ENCODE measurements at regions of chr22 and their contacts with region 1.

Region 1: GRCh38 chr22:46006379-46007002 is 29.5 kb upstream of the WNT7B start:
- DNase-seq: peak; percentile 96
- ATAC-seq: peak; percentile 88
- H3K4me3 ChIP-seq: peak overlapping the region; percentile 21
- H3K27ac ChIP-seq: peak overlapping the region; percentile 94
- H3K4me1 ChIP-seq: peaks cover 49% of the 10 kb centered on the region
- H3K27me3 ChIP-seq: no peaks in the 10 kb centered on the region
- CTCF ChIP-seq: peak; percentile 97

Region 2: DNA sequence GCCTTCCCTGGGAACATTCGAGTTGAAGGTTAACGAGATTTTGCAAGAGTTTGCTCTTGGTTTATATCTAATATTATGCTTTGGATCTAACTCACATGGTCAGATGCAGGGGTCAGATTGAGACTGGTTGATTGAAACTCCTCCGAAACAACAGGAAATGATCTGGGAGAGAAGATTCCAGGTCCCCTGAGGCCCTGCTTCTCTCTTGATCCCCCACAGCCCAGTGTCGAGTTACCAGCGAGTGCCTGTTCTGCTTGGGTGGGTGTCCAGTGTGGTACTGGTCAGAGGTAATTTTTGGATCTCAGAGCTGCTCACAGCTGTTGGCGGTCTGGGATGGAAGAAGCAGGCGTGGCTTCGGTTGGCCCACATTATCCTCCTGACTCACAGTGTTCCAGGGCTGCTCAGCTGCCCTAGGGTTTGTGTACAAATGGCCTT is 494.6 kb before region 1 on chr22:
- intact Hi-C with region 1: no loop called
- DNase-seq: no peak
- ATAC-seq: peak; percentile 38
- H3K4me3 ChIP-seq: no peak overlapping the region
- H3K27ac ChIP-seq: peak overlapping the region; percentile 65
- H3K4me1 ChIP-seq: peaks cover 16% of the 10 kb centered on the region
- H3K27me3 ChIP-seq: peaks cover 9% of the 10 kb centered on the region
- CTCF ChIP-seq: no peak

Region 3: DNA sequence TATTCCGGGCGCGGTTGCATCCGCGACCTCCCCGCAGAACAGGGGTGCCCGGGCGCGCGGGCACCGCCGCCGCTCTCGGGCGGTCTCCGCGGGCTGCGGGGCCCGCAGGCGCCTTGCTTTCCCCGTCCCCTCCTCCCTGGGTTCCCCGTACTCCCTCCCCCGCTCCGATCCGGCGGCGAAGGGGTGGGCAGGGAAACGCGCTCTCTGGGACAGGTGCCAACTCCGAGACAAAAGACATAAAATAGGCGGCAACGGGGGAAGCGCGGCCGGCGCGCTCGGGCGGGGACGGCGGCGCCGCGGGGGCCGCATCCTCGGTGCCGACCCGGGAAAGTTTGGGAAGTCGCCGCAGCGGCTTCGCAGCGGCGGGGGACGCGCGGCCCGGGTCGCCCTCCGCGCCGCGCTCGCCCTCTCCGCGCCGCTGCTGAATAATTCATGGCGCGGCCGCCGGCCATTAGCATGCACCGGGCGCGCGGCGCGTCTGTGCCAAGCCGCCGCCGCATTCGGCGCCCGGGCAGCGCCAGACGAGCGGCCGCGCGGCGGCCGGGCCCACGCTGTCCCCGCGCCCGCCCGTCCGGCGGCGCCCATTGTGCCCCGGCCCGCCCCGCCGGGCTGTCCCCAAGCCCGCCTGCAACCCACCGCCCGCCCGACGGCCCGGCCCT is 65.1 kb after region 1 on chr22:
- intact Hi-C with region 1: loop called (anchors 10 kb)
- DNase-seq: peak; percentile 95
- ATAC-seq: peak; percentile 55
- H3K4me3 ChIP-seq: peak overlapping the region; percentile 89
- H3K27ac ChIP-seq: peak overlapping the region; percentile 98
- H3K4me1 ChIP-seq: peaks cover 43% of the 10 kb centered on the region
- H3K27me3 ChIP-seq: no peaks in the 10 kb centered on the region
- CTCF ChIP-seq: no peak

Region 4: GRCh38 chr22:46116491-46116958 is 110.0 kb after region 1 on chr22:
- intact Hi-C with region 1: loop called (anchors 2 kb)
- DNase-seq: peak; percentile 97
- ATAC-seq: peak; percentile 90
- H3K4me3 ChIP-seq: no peak overlapping the region
- H3K27ac ChIP-seq: peak overlapping the region; percentile 66
- H3K4me1 ChIP-seq: peaks cover 20% of the 10 kb centered on the region
- H3K27me3 ChIP-seq: no peaks in the 10 kb centered on the region
- CTCF ChIP-seq: peak; percentile 69

Measured in upper lobe of right lung (tissue), 1 donor.